ENCODE measurements at regions of chr18 and their contacts with region 1.

Region 1: GRCh38 chr18:79625195-79625923 is 54.2 kb upstream of the CTDP1 start:
- DNase-seq: no peak
- H3K4me3 ChIP-seq: no peak overlapping the region
- CTCF ChIP-seq: no peak

Region 2: DNA sequence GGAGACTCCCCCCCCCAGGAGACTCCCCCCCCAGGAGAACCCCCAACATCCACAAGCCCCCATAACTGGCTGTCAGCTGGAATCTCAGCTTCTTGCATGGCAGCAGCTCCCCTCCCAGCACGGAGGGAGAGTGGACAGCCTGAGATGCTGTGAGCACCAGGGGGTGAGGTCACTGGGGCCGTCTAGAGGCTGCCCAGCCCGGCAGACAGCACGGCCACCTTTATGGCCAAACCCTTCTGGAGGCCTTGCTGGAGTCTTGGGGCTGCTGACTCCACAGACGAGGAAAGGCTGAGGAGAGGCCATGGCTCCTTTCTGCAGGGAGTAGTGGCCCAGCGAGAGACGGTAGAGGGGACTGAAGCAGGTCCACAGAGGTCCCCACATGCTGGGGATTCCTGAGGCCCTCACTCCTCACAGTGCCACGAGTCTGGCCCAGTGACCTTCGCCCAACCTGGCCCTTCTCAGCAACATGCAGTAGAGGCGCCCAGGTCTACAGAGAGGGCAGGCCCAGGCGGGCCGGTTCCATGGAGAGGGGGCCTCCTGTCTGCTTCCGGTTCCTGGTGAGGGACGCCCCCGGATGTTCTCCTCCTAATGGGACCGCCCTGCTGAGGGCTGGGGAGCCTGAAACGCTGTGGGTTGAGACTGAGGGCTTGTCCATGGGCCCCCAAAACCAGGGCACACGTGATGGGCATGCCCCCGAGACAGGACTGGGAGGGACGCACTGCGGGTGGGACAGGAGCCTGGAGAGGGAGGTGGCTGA is 68.4 kb before region 1 on chr18:
- in situ Hi-C with region 1: loop called (anchors 5 kb)
- DNase-seq: no peak
- H3K4me3 ChIP-seq: no peak overlapping the region
- CTCF ChIP-seq: no peak